IMR-90 (cell line): ENCODE measurements at regions of chr7 and their contacts with region 1.

Region 1: DNA sequence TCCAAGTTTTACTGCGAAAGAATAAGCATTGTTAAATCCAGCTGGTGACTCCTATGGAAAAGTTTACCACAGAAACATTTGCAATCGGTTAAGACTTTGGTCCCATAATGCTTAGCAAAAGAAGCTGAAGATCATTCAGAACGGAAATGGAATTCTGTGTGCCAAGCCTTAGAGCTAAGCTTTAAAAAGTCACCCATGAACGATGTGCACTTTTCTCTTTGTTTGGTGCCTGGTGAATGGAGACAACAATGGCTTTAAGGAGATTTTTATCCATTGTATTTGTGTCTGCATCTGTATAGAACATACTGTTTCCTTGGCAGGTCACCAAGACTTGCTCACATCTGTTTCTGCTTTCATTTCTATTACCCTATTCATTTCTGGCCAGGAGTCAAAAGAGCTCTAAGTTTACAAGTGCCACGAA is 26.3 kb upstream of the COL1A2 start:
- DNase-seq: peak; percentile 90
- ATAC-seq: peak; percentile 84
- H3K4me3 ChIP-seq: peak overlapping the region; percentile 45; the same call in 1 of the 2 replicates
- H3K27ac ChIP-seq: peak overlapping the region; percentile 54
- H3K4me1 ChIP-seq: peaks cover 12% of the 10 kb centered on the region
- H3K27me3 ChIP-seq: no peaks in the 10 kb centered on the region
- CTCF ChIP-seq: no peak
- POLR2A ChIP-seq: no peak
- RAD21 ChIP-seq: no peak

Region 2: GRCh38 chr7:94301024-94301586 is 67.3 kb before region 1 on chr7:
- CTCF ChIA-PET with region 1: interaction called, 10 read pairs
- POLR2A ChIA-PET with region 1: interaction called, 7 read pairs
- dilution Hi-C with region 1: no loop called
- in situ Hi-C with region 1: no loop called
- intact Hi-C with region 1: no loop called
- DNase-seq: peak; percentile 98
- ATAC-seq: peak; percentile 80
- H3K4me3 ChIP-seq: peak overlapping the region; percentile 14; the same call in 1 of the 2 replicates
- H3K27ac ChIP-seq: peak overlapping the region; percentile 98
- H3K4me1 ChIP-seq: peaks cover 26% of the 10 kb centered on the region
- H3K27me3 ChIP-seq: no peaks in the 10 kb centered on the region
- CTCF ChIP-seq: 0 out of 2 replicates have a peak, but pooled peaks have one; percentile 26
- POLR2A ChIP-seq: peak; percentile 71
- RAD21 ChIP-seq: peak; percentile 42

Region 3: GRCh38 chr7:94348142-94348541 is 20.2 kb before region 1 on chr7:
- CTCF ChIA-PET with region 1: interaction called, 3 read pairs
- POLR2A ChIA-PET with region 1: no interaction called
- dilution Hi-C with region 1: no loop called
- in situ Hi-C with region 1: no loop called
- intact Hi-C with region 1: loop called (anchors 2 kb)
- DNase-seq: peak; percentile 95
- ATAC-seq: peak; percentile 88
- H3K4me3 ChIP-seq: peak overlapping the region; percentile 1; the same call in 1 of the 2 replicates
- H3K27ac ChIP-seq: peak overlapping the region; percentile 71
- H3K4me1 ChIP-seq: peaks cover 16% of the 10 kb centered on the region
- H3K27me3 ChIP-seq: no peaks in the 10 kb centered on the region
- CTCF ChIP-seq: no peak
- POLR2A ChIP-seq: no peak
- RAD21 ChIP-seq: no peak

Region 4: GRCh38 chr7:94710256-94710655 is 341.9 kb after region 1 on chr7:
- CTCF ChIA-PET with region 1: no interaction called
- POLR2A ChIA-PET with region 1: no interaction called
- dilution Hi-C with region 1: no loop called
- in situ Hi-C with region 1: no loop called
- intact Hi-C with region 1: no loop called
- DNase-seq: peak; percentile 31
- ATAC-seq: no peak
- H3K4me3 ChIP-seq: no peak overlapping the region
- H3K27ac ChIP-seq: no peak overlapping the region
- H3K4me1 ChIP-seq: no peaks in the 10 kb centered on the region
- H3K27me3 ChIP-seq: peaks cover 1% of the 10 kb centered on the region; the same call in 1 of the 2 replicates
- CTCF ChIP-seq: no peak
- POLR2A ChIP-seq: no peak
- RAD21 ChIP-seq: no peak